ENCODE measurements at regions of chr7 and their contacts with region 1.

Region 1: DNA sequence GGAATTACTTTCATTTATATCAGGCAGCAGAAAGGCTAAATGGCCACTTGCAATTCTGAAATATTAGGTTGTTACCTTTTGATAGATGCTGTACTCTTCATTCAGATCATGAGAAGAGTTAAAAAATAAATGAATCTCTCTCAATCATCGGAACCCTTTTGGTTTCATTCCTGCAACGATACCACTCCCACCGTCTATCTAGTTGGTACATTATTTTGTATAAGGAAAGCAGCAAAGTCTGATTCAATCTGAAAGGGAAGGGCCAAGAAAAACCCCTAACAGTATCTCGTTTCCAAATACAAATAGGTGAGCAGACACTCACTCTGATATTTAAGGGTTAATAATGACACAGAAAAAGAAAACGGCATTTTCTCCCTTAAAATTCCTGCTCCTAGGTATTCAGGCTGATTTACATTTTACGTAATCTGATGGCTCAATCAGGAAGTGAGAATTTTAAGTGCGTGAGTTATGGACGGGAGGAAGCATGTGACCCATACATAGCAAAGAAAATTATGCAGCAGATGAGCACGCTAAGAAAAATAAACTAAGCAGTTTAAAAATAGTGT is 209.4 kb upstream of the KLF14 start:
- DNase-seq: no peak
- H3K4me3 Mint-ChIP-seq: peak overlapping the region; percentile 62
- H3K27ac Mint-ChIP-seq: peak overlapping the region; percentile 90
- H3K4me1 Mint-ChIP-seq: peaks cover 91% of the 10 kb centered on the region
- H3K27me3 Mint-ChIP-seq: no peaks in the 10 kb centered on the region

Region 2: DNA sequence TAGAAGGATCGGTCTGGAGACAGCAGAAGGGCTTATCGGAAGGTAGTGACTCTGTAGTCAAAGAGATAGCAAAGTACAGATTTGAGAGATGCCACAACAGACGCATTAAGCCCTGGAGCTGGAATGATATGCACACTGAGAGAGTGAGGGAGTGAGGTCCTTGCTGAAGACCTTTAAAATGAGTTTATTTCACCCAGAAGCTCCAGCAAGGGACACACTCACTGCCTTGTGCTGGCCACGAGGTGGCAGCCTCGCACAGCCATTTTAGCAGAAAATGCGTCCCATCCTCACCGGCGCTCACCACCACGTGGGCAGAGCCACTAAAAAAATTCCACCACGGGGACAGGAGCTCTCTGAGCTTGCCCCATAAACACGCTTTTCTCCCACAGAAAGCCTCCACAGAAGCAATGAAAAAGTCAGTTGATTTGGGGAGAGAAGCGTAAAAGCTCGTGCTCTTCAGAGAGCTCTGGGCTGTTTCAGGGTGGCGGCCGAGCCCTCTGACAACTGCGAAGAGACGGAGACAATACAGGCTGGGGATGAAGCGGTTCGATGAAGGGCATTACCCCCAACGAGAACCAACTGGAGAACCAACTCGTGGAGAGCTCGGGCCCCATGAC is 46.4 kb before region 1 on chr7:
- CTCF ChIA-PET with region 1: interaction called, 11 read pairs
- intact Hi-C with region 1: no loop called
- DNase-seq: peak; percentile 85
- H3K4me3 Mint-ChIP-seq: no peak overlapping the region
- H3K27ac Mint-ChIP-seq: peak overlapping the region; percentile 85
- H3K4me1 Mint-ChIP-seq: peaks cover 88% of the 10 kb centered on the region
- H3K27me3 Mint-ChIP-seq: no peaks in the 10 kb centered on the region

Region 3: DNA sequence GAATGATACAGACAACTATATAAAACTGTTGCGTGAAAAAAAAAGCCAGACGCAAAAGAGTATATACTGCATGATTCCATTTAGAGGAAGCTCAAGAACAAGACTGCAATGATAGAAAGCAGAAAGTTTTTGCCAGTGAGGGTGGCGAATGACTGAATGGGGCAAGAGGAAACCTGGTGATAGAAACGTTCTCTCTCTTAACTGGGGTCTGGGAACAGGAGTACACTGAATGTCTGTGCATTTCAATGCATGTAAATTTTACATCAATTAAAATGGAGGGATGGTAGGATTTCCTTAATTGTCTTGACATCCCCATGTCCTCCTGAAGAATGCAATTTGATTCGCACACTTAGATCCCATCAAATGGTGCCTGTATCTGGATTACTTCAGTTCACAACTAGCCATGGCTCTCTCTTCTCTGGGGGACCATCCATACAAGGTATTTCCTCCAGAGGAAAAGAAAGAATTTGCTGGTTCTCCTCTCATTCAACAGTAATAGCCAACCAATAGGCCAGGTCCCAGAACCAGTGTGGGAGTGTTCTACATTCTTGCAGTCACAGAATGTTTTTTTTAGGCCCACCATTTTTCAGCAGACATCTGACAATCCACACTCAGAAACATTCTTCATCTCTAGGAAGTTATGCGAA is 11.6 kb after region 1 on chr7:
- CTCF ChIA-PET with region 1: interaction called, 32 read pairs
- intact Hi-C with region 1: loop called (anchors 1 kb)
- DNase-seq: no peak
- H3K4me3 Mint-ChIP-seq: peak overlapping the region; percentile 87
- H3K27ac Mint-ChIP-seq: peak overlapping the region; percentile 99
- H3K4me1 Mint-ChIP-seq: peaks cover 35% of the 10 kb centered on the region
- H3K27me3 Mint-ChIP-seq: no peaks in the 10 kb centered on the region

Measured in activated naive CD4-positive, alpha-beta T cell treated with anti-CD3 and anti-CD28 coated beads for 36 hours (primary cell).